ENCODE measurements at regions of chr11 and their contacts with region 1.

Region 1: GRCh38 chr11:34243726-34244464 is 113.9 kb downstream of the ABTB2 start:
- DNase-seq: peak; percentile 45
- H3K4me3 ChIP-seq: no peak overlapping the region
- CTCF ChIP-seq: no peak

Region 2: DNA sequence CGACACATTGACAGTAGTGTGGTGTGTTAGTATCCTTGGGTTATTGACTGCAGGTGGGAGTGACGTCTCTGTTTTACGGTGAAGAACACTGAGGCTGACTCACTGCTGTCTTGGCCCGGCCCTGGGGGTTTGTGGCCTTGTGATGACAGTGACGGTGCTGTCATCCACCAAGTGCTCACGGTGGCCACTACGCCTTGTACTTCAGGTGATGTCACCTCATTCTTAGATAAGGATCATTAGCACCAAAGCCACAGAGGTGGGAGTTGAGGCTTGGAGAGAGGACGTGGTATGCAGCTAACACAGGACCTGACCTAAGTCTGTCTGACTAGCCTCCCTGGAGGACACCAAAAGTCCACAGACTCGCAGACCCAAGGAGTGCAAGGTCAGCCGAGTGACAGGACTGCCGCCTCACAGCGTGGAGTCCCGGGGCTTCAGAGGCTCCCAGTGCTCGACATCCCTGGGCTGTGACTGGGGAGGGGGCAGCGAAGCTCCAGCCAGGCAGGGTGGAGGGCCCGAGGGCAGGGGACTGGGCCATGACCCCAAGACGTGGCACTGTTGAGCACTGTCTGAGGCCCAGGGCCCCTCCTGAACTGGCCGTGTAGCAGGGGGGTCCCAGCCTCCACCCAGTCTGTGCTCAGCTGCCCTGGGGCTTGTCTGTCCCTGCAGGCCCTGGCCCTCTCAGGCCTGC is 81.9 kb before region 1 on chr11:
- in situ Hi-C with region 1: loop called (anchors 10 kb)
- DNase-seq: no peak
- H3K4me3 ChIP-seq: no peak overlapping the region
- CTCF ChIP-seq: no peak

Region 3: GRCh38 chr11:34204396-34205279 is 39.3 kb before region 1 on chr11:
- in situ Hi-C with region 1: no loop called
- DNase-seq: no peak
- H3K4me3 ChIP-seq: no peak overlapping the region
- CTCF ChIP-seq: no peak